Pancreas (tissue), 10 donors: ENCODE measurements at regions of chr2 and their contacts with region 1.

Region 1: DNA sequence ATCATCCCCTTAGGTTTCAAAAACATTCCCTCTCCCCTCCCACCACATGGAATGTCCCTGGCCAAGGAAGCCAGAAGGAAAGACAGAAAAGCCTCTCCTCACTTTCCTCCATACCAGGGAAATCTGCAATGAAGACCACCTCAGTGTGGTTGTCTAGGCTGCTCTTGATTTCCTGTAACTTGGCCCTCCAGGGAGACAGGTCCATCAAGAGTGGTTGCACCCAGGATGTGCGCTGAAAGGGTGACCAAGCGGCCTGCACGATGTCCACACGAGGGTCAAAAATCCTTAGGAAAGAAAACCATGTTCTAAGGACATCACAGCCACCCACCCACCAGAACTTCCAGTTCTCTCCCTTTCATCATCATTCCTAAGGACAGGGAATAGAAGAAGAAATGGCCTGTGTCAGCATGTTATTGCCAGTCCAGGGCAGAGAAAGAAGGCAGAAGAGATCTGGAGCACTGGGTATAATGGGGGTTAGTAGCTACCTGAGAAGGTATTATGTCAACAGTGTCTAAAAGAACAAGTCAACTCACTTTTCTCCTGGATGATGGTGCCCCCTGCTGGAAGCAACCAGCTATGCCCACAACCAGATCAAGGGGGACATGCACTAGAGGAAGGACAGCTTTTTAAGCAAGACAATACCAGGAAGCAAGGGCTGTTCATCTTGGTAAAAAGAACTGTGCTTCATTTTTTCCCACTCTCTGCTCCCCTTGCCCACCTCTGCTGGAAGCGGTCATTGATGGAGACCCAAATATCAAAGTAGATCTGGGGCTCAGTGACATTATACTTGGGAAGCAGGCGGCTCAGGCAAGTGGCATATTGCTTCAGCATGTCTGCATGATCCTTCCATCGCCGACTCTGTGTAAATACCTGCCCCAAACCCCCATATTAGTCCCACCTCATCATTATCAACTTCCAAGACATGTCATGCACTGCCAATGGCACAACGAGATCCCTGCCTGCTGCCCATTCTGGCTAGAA is 9.3 kb downstream of the GGCX start:
- DNase-seq: peak; percentile 80 to 91 (median 86)
- ATAC-seq: peak; percentile 60 to 92 (median 80)
- H3K4me3 ChIP-seq: no peak overlapping the region
- H3K27ac ChIP-seq: peak overlapping the region in 1 of 4 donors; percentile 30
- H3K4me1 ChIP-seq: peaks cover 0 to 11% (median 0%) of the 10 kb centered on the region in 3 donors
- H3K27me3 ChIP-seq: no peaks in the 10 kb centered on the region
- CTCF ChIP-seq: peak; percentile 75 to 87 (median 85)

Region 2: GRCh38 chr2:85420536-85421259 is 131.3 kb before region 1 on chr2:
- intact Hi-C with region 1: loop called (anchors 5 to 10 kb)
- DNase-seq: peak; percentile 93 to 98 (median 96)
- ATAC-seq: peak; percentile 76 to 85 (median 80)
- H3K4me3 ChIP-seq: peak overlapping the region in 1 of 4 donors; percentile 6
- H3K27ac ChIP-seq: peak overlapping the region; percentile 79 to 88 (median 84)
- H3K4me1 ChIP-seq: peaks cover 26 to 47% (median 39%) of the 10 kb centered on the region in 3 donors
- H3K27me3 ChIP-seq: no peaks in the 10 kb centered on the region
- CTCF ChIP-seq: peak; percentile 99 to 100 (median 100)